ENCODE measurements at regions of chr12 and their contacts with region 1.

Region 1: DNA sequence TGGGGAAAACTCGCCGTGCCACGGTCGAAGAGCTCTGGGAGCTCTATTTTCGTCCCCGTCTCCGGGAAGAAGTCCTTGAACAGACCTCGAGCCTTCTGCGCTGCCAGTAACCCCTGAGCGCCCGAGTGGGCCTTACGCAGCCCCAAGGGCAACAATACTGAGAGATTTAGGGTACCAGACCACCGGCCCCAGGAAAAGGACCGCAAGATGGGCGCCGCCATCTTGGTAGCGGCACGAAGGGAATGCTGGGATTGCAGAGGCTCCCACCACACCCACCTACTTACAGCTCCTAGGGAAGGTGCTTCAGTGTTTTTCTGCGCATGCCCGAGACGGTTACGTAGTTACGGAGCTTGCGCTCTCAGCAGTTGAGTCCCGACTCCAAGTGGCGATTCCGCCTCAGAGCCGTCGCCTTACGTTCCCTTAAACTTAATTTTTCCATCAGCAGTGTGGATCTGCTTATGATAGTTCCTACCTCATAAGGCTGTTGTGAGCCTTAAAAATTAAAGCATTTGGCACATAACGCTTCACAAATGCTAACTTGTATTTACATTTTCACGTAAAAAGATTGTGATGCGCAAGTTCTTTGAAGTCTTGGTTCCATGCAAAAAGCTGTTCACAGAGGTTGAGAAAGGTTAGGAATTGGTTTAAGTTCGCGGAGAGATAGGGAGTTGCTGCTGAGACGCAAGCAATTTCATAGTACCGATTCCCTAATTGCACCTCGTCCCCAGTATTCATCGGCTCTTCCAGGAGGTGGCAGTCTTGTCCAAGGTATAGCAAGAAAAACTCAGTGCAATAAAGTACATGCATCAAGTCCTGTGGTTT is at the start of gene YARS2:
- DNase-seq: peak; percentile 92
- H3K4me3 Mint-ChIP-seq: peak within 1 kb of the TSS; percentile 92
- H3K27ac Mint-ChIP-seq: peak within 1 kb of the TSS; percentile 87
- H3K4me1 Mint-ChIP-seq: peaks cover 25% of the 10 kb centered on the region
- H3K27me3 Mint-ChIP-seq: no peaks in the 10 kb centered on the region

Region 2: DNA sequence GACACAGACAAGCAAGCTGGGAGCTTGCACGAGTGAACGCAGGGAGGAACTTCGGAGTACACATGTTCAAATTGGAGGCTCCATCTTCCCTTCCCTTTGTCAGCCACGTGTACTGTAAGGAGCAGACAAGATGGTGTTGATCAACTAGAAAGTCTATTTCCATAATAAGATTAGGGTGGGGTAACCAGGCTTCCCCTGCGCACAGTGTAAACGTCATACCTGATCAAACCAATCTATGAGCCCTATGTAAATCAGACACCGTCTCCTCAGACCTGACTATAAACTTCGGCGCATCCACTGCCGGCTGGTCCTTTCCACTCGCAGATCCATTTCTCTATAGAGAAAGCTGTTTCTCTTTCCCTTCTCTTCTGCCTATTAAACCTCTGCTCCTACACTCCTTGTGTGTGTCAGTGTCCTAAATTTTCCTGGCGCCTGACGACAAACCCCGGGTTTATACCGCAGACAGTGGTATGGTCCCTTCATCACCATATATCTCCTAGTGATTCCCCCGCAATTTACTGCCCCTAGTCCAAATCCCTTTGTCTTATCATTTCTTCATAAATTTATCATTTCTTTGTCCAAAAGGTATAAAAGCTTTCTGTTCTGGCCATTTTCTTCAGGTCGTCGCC is 1103.9 kb before region 1 on chr12:
- CTCF ChIA-PET with region 1: interaction called, 15 read pairs
- DNase-seq: no peak
- H3K4me3 Mint-ChIP-seq: no peak overlapping the region
- H3K27ac Mint-ChIP-seq: no peak overlapping the region
- H3K4me1 Mint-ChIP-seq: peaks cover 14% of the 10 kb centered on the region
- H3K27me3 Mint-ChIP-seq: no peaks in the 10 kb centered on the region

Region 3: DNA sequence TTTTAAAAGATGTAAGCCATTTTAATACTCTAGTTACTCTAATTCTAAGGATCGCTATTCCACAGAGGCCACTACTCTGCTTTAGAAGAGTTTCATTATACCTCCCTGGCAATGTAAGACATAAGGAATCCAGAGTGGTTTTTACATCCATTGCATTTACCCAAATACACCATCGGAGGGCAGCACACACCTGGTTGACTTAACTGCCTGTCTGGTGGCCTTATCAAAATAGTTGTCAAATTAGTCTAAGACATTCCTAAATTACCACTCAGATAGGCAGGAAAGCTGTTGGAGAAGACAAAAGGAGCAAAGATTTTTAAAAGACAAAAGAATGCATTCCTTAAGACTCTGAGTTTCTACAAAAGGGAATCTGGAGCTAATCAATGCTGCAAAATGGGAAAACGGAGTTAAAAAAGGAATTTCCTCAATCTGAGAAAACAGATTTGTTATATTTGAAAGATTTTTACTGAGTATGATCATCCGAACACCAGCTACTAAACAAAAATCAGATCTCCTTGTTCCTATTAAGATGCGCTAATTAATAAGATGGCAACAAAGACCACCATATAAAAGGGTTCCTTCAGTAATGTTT is 390.3 kb before region 1 on chr12:
- CTCF ChIA-PET with region 1: interaction called, 22 read pairs
- DNase-seq: peak; percentile 64
- H3K4me3 Mint-ChIP-seq: no peak overlapping the region
- H3K27ac Mint-ChIP-seq: no peak overlapping the region
- H3K4me1 Mint-ChIP-seq: no peaks in the 10 kb centered on the region
- H3K27me3 Mint-ChIP-seq: no peaks in the 10 kb centered on the region

Region 4: DNA sequence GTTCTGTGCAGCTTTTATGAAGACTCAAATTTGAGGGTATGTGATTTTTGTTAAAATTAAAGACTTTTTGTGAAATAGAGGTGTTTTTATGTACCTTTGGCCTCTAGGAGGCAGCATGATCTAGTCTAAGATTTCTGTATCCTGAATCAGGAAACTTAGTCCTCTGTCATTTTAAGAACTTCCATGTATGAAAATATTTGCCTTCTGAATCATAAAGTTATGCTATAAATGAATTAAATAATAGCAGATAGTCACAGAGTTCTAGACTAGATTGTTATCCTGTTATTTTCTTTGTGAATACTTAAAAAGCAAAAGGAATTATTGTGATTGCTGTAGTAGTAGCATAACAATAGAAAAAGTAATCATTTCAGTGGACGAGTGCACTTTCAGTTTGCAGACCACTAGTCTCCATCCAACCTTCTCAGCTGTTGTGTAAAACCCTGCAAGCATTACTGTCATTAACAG is 300.2 kb before region 1 on chr12:
- CTCF ChIA-PET with region 1: interaction called, 26 read pairs
- DNase-seq: no peak
- H3K4me3 Mint-ChIP-seq: no peak overlapping the region
- H3K27ac Mint-ChIP-seq: no peak overlapping the region
- H3K4me1 Mint-ChIP-seq: no peaks in the 10 kb centered on the region
- H3K27me3 Mint-ChIP-seq: peaks cover 8% of the 10 kb centered on the region

Region 5: GRCh38 chr12:32727237-32727636 is 28.6 kb before region 1 on chr12:
- CTCF ChIA-PET with region 1: interaction called, 10 read pairs
- DNase-seq: no peak
- H3K4me3 Mint-ChIP-seq: no peak overlapping the region
- H3K27ac Mint-ChIP-seq: peak overlapping the region; percentile 42
- H3K4me1 Mint-ChIP-seq: no peaks in the 10 kb centered on the region
- H3K27me3 Mint-ChIP-seq: no peaks in the 10 kb centered on the region

Region 6: DNA sequence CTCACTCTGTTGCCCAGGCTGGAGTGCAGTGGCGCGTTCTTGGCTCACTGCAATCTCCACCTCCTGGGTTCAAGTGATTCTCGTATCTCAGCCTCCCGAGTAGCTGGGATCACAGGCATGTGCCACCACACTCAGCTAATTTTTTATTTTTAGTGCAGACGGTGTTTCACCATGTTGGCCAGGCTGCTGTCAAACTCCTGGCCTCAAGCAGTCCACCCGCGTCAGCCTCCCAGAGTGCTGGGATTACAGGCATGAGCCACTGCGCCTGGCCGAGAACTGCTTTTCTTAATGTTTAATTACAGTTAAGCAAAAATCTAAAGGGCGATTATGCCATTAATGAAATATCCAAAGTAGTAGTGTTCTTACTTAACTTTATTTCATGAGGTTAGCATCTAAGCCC is 13.7 kb before region 1 on chr12:
- CTCF ChIA-PET with region 1: interaction called, 12 read pairs
- DNase-seq: no peak
- H3K4me3 Mint-ChIP-seq: no peak overlapping the region
- H3K27ac Mint-ChIP-seq: no peak overlapping the region
- H3K4me1 Mint-ChIP-seq: no peaks in the 10 kb centered on the region
- H3K27me3 Mint-ChIP-seq: no peaks in the 10 kb centered on the region

Region 7: GRCh38 chr12:34022079-34022830 is 1266.4 kb after region 1 on chr12 and contains the start of gene ALG10:
- CTCF ChIA-PET with region 1: interaction called, 61 read pairs
- DNase-seq: peak; percentile 97
- H3K4me3 Mint-ChIP-seq: peak within 1 kb of the TSS; percentile 91
- H3K27ac Mint-ChIP-seq: peak within 1 kb of the TSS; percentile 97
- H3K4me1 Mint-ChIP-seq: peaks cover 32% of the 10 kb centered on the region
- H3K27me3 Mint-ChIP-seq: no peaks in the 10 kb centered on the region

Measured in activated naive CD4-positive, alpha-beta T cell treated with anti-CD3 and anti-CD28 coated beads, Interleukin-2, amount 10 ng/mL, durations not matched to agents 7 days and 5 days (primary cell).